Psoas muscle (tissue), 8 donors: ENCODE measurements at regions of chr12 and their contacts with region 1.

Region 1: DNA sequence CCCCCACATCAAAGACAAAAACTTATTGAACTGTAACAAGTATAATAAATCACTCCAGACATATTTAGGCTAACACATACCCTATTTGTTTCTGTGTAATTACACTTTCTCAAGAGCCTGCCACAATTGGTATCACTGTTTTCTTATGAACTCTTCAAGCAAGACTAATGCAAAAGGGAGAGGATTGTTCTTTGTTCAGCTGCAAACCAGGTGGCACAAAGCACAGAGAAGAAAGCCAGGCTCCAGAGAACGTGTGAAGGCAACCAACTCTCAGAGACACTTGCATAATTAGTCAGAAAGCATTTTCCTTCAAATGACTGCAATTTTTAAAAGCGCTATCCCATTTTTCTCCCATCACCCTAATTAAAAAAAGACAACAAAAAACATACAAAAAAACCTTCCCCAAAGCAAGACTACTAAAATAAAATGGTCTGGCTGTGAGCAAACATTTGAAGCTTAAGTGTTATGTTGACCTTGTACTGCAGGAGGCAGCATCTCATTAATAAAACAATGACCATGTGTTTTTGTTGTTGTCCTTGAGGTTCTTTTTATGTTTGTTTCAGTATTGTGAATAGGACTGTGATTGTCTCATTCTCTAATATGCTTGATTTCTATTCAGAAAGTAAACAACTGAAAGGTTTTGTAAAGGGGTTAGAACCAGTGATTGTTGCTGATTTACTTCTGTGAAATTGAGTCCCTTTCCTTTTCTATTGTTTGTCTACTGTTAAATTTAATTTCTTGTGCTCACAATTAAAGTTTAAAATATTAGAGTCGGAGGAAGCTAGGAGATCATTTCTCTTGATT is 452.7 kb upstream of the PDE3A start:
- DNase-seq: no peak
- ATAC-seq: peak in 2 of 4 donors; percentile 30 to 60
- H3K4me3 ChIP-seq: no peak overlapping the region
- H3K27ac ChIP-seq: no peak overlapping the region
- H3K4me1 ChIP-seq: no peaks in the 10 kb centered on the region
- H3K27me3 ChIP-seq: no peaks in the 10 kb centered on the region
- CTCF ChIP-seq: peak; percentile 57

Region 2: GRCh38 chr12:20369305-20370005 is 453.9 kb after region 1 on chr12:
- intact Hi-C with region 1: loop called (anchors 10 kb)
- DNase-seq: peak; percentile 63 to 78
- ATAC-seq: peak; percentile 50 to 76 (median 72)
- H3K4me3 ChIP-seq: peak overlapping the region; percentile 71
- H3K27ac ChIP-seq: peak overlapping the region; percentile 38
- H3K4me1 ChIP-seq: no peaks in the 10 kb centered on the region
- H3K27me3 ChIP-seq: peaks cover 0 to 12% (median 0%) of the 10 kb centered on the region in 3 donors
- CTCF ChIP-seq: peak; percentile 8

Region 3: GRCh38 chr12:20527417-20528163 is 612.0 kb after region 1 on chr12:
- intact Hi-C with region 1: loop called in 1 of 2 experiments (anchors 10 kb)
- DNase-seq: no peak
- ATAC-seq: no peak
- H3K4me3 ChIP-seq: no peak overlapping the region
- H3K27ac ChIP-seq: no peak overlapping the region
- H3K4me1 ChIP-seq: no peaks in the 10 kb centered on the region
- H3K27me3 ChIP-seq: no peaks in the 10 kb centered on the region
- CTCF ChIP-seq: no peak

Region 4: GRCh38 chr12:20596061-20596460 is 680.5 kb after region 1 on chr12:
- intact Hi-C with region 1: loop called in 1 of 2 experiments (anchors 10 kb)
- DNase-seq: no peak
- ATAC-seq: no peak
- H3K4me3 ChIP-seq: no peak overlapping the region
- H3K27ac ChIP-seq: no peak overlapping the region
- H3K4me1 ChIP-seq: no peaks in the 10 kb centered on the region
- H3K27me3 ChIP-seq: no peaks in the 10 kb centered on the region
- CTCF ChIP-seq: no peak

Region 5: GRCh38 chr12:21169878-21170472 is 1254.4 kb after region 1 on chr12:
- intact Hi-C with region 1: loop called in 1 of 2 experiments (anchors 5 kb)
- DNase-seq: no peak
- ATAC-seq: no peak
- H3K4me3 ChIP-seq: no peak overlapping the region
- H3K27ac ChIP-seq: no peak overlapping the region
- H3K4me1 ChIP-seq: no peaks in the 10 kb centered on the region
- H3K27me3 ChIP-seq: no peaks in the 10 kb centered on the region
- CTCF ChIP-seq: peak; percentile 17